ENCODE measurements at regions of chr2 and their contacts with region 1.

Region 1: DNA sequence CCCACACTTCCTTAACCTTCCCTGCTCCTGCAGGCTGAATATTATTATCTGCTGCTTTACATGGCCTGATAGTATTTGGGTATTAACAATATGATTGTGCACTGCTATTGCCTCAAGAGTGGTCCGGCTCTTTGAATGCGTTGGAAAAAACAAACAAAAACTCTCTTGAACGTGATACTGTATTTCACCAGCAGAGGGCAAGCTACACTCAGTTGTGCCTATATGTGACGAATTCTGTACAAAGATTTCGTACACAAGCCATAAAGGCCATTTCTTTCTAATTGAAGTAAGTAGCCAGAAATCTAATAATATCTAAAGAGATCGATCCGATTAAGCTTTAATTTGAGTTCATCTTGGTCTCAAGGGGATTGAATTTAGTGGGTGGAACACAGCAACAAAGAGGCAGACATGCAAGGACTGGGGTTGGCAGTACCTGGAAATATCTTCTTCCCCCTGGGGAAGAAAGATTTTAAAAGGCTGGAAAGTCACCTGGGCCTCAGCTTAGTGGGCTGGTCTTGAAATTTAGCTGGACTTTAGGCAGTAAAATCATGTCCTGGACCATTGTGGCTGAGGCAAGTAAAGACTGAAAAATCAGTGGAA is 49.3 kb upstream of the RAB6D start:
- DNase-seq: no peak
- ATAC-seq: peak; percentile 65
- H3K4me3 Mint-ChIP-seq: no peak overlapping the region
- H3K27ac Mint-ChIP-seq: no peak overlapping the region
- H3K4me1 Mint-ChIP-seq: no peaks in the 10 kb centered on the region
- H3K27me3 Mint-ChIP-seq: peaks cover 36% of the 10 kb centered on the region
- CTCF ChIP-seq: peak; percentile 57

Region 2: GRCh38 chr2:131801210-131801744 is 388.0 kb after region 1 on chr2:
- CTCF ChIA-PET with region 1: interaction called, 7 read pairs
- POLR2A ChIA-PET with region 1: no interaction called
- intact Hi-C with region 1: loop called (anchors 1 kb)
- DNase-seq: no peak
- ATAC-seq: no peak
- H3K4me3 Mint-ChIP-seq: no peak overlapping the region
- H3K27ac Mint-ChIP-seq: no peak overlapping the region
- H3K4me1 Mint-ChIP-seq: peaks cover 4% of the 10 kb centered on the region
- H3K27me3 Mint-ChIP-seq: peaks cover 3% of the 10 kb centered on the region
- CTCF ChIP-seq: no peak